BJ (cell line): ENCODE measurements at regions of chr18 and their contacts with region 1.

Region 1: GRCh38 chr18:12391618-12392165 is 14.7 kb upstream of the AFG3L2 start:
- DNase-seq: no peak
- H3K4me3 ChIP-seq: no peak overlapping the region
- H3K27me3 ChIP-seq: no peaks in the 10 kb centered on the region; the same call in 1 of the 2 replicates
- CTCF ChIP-seq: peak; percentile 96

Region 2: DNA sequence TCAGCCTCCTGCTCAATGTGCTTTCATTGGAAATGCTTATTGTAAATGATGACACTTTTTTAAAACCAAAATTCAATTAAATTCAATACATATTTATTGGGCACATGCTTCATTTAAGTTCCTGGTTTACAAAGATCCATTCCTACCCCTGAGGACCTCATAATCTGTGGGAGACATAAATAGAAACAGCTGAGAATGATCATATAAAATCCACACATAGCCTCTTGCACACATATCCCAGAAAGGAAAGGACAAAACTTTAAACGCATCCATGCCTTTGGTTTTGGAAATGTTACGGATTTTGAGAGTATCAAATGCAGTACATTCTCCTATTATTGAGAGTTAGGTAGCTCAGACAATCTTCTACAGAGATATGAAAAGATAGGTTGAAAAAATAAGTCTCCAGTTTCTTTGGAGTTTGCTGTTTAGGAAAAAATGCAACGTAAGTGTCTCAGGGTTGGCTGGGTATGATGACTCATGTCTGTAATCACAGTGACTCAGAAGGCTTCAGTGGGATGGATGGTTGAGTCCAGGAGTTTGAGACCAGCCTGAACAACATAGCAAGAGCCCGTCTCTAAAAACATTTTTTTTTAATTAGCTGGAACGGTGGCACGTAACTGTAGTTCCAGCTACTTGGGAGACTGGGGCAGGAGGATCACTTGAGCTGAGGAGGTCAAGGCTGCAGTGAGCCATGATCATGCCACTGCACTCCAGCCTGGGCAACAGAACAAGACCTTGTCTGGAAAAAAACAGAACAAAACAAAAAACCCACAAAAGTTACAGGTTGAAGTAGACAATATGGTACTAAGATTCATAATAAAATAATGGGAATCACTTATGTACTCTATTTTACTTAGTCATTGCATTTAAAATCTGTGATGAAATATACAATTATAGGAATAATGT is 12.2 kb after region 1 on chr18:
- CTCF ChIA-PET with region 1: interaction called, 54 read pairs
- POLR2A ChIA-PET with region 1: no interaction called
- DNase-seq: peak; percentile 71
- H3K4me3 ChIP-seq: no peak overlapping the region
- H3K27me3 ChIP-seq: peaks cover 3% of the 10 kb centered on the region; the same call in 1 of the 2 replicates
- CTCF ChIP-seq: no peak

Region 3: GRCh38 chr18:12531749-12532148 is 140.1 kb after region 1 on chr18:
- CTCF ChIA-PET with region 1: interaction called, 3 read pairs
- POLR2A ChIA-PET with region 1: interaction called, 10 read pairs
- DNase-seq: no peak
- H3K4me3 ChIP-seq: no peak overlapping the region
- H3K27me3 ChIP-seq: no peaks in the 10 kb centered on the region
- CTCF ChIP-seq: peak; percentile 12; the same call in 1 of the 2 replicates

Region 4: GRCh38 chr18:12657684-12658425 is 266.2 kb after region 1 on chr18 and contains the start of gene SPIRE1:
- CTCF ChIA-PET with region 1: interaction called, 158 read pairs
- POLR2A ChIA-PET with region 1: no interaction called
- DNase-seq: no peak
- H3K4me3 ChIP-seq: peak within 1 kb of the TSS; percentile 74
- H3K27me3 ChIP-seq: no peaks in the 10 kb centered on the region
- CTCF ChIP-seq: no peak
- polyA plus RNA-seq, gene SPIRE1: 11.6 and 16.4 TPM in 2 replicates